Activated naive CD4-positive, alpha-beta T cell treated with anti-CD3 and anti-CD28 coated beads for 36 hours (primary cell): ENCODE measurements at regions of chr3 and their contacts with region 1.

Region 1: GRCh38 chr3:17431004-17431403 is 311.4 kb downstream of the TBC1D5 start:
- DNase-seq: no peak
- H3K4me3 Mint-ChIP-seq: no peak overlapping the region
- H3K27ac Mint-ChIP-seq: no peak overlapping the region
- H3K4me1 Mint-ChIP-seq: no peaks in the 10 kb centered on the region
- H3K27me3 Mint-ChIP-seq: no peaks in the 10 kb centered on the region

Region 2: DNA sequence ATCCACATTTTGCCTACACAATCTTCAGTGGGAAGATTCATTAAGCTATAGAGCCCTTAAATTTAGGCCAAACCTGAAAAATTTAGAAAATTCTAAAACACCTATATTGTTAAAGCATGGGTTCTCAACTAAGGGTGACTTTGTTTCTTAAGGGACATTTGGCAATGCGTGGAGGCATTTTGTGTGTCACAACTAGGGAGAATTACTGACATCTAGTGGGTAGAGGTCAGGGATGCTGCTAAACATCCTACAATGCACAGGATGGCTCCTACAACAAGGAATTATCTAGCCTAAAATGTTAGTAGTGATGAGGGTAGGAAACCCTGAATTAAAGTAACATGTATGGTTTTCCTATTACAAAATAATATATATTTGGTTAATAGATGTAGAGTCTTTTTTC is 255.6 kb after region 1 on chr3:
- CTCF ChIA-PET with region 1: no interaction called
- intact Hi-C with region 1: loop called (anchors 5 kb)
- DNase-seq: no peak
- H3K4me3 Mint-ChIP-seq: no peak overlapping the region
- H3K27ac Mint-ChIP-seq: no peak overlapping the region
- H3K4me1 Mint-ChIP-seq: no peaks in the 10 kb centered on the region
- H3K27me3 Mint-ChIP-seq: no peaks in the 10 kb centered on the region

Region 3: DNA sequence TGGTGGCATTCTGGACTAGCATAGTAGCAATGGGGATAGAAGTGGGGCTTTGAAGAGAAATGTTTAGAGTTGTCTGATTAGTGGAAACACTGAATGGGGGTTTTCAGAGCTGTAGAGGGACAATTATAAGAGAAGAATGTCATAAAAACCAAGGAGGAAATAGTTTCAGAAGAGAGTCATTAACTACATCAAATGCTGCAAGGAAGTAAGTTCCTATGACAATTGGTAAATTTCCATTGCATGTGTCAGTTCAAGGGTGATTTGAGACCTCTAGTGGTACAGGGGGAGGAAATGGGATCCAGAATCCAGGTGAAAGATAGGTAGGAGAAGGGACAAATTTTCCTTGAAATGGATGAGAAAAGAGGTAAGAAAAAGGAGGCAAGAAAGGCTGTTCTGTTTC is 379.8 kb after region 1 on chr3:
- CTCF ChIA-PET with region 1: no interaction called
- intact Hi-C with region 1: loop called (anchors 1 kb)
- DNase-seq: no peak
- H3K4me3 Mint-ChIP-seq: no peak overlapping the region
- H3K27ac Mint-ChIP-seq: no peak overlapping the region
- H3K4me1 Mint-ChIP-seq: peaks cover 11% of the 10 kb centered on the region
- H3K27me3 Mint-ChIP-seq: peaks cover 8% of the 10 kb centered on the region

Region 4: DNA sequence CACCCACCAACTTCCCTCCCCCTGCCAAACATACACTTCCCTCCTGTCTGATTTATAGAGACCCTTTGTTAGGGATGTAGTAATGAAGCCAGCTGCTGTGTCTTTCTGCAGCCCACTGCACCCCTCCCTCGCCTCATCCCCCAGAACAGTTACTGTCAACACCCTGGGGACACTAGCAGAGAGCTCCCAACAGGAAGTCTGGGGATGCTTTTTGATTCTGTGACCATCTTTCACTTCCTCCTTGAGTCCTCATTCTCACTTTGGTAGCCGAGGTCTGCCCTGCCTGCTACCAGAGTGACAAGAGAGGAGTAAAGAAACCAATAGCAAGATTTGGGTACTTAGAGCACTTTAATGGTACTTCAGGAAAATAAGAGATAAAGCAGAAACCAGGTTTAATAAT is 792.6 kb after region 1 on chr3:
- CTCF ChIA-PET with region 1: no interaction called
- intact Hi-C with region 1: no loop called
- DNase-seq: peak; percentile 8
- H3K4me3 Mint-ChIP-seq: no peak overlapping the region
- H3K27ac Mint-ChIP-seq: no peak overlapping the region
- H3K4me1 Mint-ChIP-seq: peaks cover 15% of the 10 kb centered on the region
- H3K27me3 Mint-ChIP-seq: peaks cover 4% of the 10 kb centered on the region